Activated CD8-positive, alpha-beta memory T cell treated with anti-CD3 and anti-CD28 coated beads, Interleukin-2, amount 10 ng/mL, durations not matched to agents 7 days and 5 days (primary cell): ENCODE measurements at regions of chr1 and their contacts with region 1.

Region 1: DNA sequence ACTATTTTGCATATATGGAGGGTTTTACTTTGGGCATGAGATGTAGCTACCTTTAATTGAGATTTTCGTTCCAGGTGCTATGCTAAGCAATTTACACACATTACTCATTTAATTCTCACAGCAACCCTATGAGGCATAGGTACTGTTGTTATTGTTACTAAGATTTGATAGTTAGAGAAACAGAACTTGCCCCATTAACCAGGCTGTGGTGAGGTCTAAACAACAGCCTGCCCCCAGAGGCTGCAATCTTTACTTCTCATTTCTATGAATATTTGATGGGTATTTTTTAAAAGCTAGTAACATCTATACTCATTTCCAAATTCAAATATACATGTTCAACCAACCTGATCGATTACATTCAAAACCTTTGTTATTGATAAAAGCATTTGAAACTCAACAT is 155.6 kb downstream of the GALNT2 start:
- DNase-seq: no peak
- ATAC-seq: no peak
- H3K4me3 Mint-ChIP-seq: no peak overlapping the region
- H3K27ac Mint-ChIP-seq: no peak overlapping the region
- H3K4me1 Mint-ChIP-seq: peaks cover 8% of the 10 kb centered on the region
- H3K27me3 Mint-ChIP-seq: no peaks in the 10 kb centered on the region

Region 2: DNA sequence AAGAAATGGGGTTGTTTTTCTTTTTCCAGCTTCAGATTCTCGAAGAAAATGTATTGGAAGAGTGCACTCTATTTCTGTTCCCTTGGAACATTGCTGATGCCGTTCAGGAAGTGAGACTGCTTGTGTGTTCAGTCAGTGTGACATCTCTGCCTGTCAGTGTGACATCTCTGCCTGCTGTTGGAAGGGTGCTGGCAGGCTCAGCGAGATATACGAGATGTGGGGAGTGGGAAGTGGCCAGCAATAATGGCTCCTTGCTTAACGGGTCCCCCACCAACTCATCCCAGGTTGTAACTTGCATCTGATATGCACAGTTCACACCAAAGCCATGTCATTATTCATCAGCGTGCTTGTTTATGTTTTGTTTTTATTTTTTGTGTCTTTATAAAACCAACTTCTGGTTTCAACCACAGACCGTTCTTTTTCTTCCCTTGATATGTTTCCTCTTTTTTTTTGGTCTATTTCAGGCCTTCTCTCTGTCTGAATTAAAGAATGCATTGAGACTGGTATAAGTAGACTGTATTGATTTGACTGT is 10.2 kb before region 1 on chr1:
- CTCF ChIA-PET with region 1: interaction called, 10 read pairs
- DNase-seq: peak; percentile 63
- ATAC-seq: peak; percentile 31
- H3K4me3 Mint-ChIP-seq: peak overlapping the region; percentile 67
- H3K27ac Mint-ChIP-seq: peak overlapping the region; percentile 88
- H3K4me1 Mint-ChIP-seq: peaks cover 66% of the 10 kb centered on the region
- H3K27me3 Mint-ChIP-seq: no peaks in the 10 kb centered on the region